Breast epithelium (tissue), 4 donors: ENCODE measurements at regions of chr20 and their contacts with region 1.

Region 1: DNA sequence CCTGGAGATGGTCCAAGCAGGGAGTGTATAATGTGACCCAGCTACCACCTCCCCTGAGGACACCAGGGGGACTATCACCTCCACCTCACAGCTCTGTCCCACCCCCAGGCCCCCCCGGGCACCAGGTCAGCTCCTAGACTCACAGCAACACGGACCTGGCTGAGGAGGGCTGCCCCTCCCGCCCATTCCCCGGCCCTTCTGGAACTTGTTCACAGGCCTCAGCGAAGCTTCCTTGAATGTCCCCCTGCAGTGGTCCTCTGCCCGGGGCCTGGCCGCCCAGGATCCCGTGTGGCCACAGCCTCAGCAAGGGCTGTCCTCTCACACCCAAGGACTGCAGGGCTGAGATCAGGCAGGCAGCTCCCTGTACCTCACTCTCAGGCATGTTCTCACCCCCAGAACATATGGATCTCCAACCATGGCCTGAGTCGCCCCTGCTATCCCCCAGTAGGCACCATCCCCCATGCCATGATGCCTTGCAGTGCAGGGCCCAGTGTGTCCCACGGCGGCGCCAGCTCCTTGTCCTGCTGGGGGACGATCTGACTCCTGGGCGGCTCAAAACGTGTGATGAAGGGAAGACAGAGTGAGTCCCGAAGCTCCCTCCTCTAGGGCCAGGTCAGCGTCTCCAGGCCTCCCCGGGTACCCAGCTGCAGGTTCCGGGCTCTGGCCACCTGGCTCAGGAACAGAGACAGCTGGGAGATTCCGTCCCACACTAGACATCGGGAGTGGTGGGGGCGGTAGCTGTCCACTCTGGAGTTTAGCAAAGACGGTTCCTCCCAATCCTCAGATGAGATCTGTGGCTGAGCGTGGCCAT is 158.4 kb downstream of the TAF4 start:
- DNase-seq: no peak
- H3K4me3 ChIP-seq: no peak overlapping the region
- H3K27ac ChIP-seq: no peak overlapping the region
- H3K4me1 ChIP-seq: no peaks in the 10 kb centered on the region
- H3K27me3 ChIP-seq: peaks cover 0 to 6% of the 10 kb centered on the region in 2 donors
- CTCF ChIP-seq: no peak
- POLR2A ChIP-seq: no peak

Region 2: GRCh38 chr20:61951695-61952533 is 44.6 kb after region 1 on chr20:
- intact Hi-C with region 1: loop called (anchors 1 kb)
- DNase-seq: peak in 1 of 2 donors; percentile 24
- H3K4me3 ChIP-seq: no peak overlapping the region
- H3K27ac ChIP-seq: no peak overlapping the region
- H3K4me1 ChIP-seq: no peaks in the 10 kb centered on the region
- H3K27me3 ChIP-seq: peaks cover 0 to 20% of the 10 kb centered on the region in 2 donors
- CTCF ChIP-seq: no peak
- POLR2A ChIP-seq: no peak

Region 3: DNA sequence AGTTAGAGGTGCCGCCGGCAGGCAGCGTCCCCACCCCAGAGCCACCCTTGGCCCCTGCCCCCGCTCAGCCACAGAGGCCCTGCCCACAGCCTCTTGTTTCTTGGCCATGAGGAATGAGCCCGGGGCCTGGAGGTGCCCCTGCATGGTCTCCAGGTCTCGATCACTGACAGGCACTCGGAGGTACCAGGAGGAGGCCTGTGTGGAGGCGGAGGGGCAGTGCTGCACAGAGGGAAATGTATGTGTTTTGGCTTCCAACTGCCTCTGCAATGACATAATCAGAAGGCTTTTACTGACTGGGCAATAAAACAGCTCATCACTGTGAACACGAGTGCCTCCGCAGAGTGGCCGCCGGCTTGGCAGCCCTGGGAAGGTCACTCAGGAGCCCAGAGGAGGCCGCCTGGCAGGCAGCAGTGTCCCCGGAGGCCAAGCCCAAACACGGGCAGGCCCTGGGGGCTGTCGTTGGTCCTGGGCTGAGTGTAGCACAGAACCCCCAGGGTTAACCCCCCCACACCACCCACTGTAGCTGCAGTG is 629.6 kb after region 1 on chr20:
- intact Hi-C with region 1: no loop called
- DNase-seq: no peak
- H3K4me3 ChIP-seq: no peak overlapping the region
- H3K27ac ChIP-seq: no peak overlapping the region
- H3K4me1 ChIP-seq: no peaks in the 10 kb centered on the region
- H3K27me3 ChIP-seq: peaks cover 0 to 78% of the 10 kb centered on the region in 2 donors
- CTCF ChIP-seq: no peak
- POLR2A ChIP-seq: no peak

Region 4: DNA sequence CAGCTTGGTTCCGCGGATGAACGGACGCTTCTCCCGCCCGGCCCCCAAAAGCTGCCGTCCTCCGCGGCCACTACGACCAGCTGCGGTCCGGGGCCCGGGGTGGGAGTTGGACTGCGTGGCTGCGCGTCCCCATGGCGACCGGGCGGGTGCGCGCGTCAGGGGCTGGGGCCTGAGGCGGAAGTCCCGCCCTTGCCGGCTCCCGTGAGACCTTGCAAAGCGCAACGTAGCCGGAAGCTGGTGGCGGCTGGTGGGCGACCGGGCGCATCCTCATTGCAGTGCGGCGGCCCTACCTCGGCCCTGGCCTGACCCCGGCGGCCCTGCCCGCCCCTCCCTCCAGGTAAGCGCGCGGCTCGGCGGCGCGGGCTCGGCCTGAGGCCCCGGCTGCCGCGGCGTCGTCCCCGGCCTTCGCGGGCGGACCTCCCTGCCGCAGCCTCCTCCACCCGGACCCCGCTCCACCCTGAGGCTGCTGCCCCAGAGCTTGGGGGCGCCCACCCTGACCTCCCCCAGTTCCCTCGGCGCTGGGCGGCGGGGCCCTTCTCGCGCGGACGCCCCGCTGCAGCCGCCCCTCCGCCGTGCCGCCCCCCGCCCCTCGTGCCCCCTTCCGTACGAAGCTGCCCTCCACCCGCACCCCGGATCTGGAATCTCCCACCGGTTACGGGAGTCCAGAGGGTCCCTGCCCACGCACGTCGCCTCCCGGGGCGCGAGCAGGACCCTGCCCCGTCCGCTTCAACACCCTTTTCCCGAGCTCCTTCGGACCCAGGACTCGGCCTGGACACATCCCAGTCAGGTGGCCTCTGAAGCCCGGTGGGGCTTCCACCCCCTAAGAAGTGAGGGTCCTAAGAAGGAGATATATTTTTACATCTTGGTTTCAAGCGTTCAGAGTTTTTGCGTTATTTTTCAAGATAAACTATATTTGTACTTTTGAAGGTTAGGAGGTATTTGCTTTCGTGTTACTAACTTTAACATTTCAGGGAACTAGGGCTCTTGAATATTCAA is 1365.6 kb after region 1 on chr20 and contains the start of gene ARFGAP1:
- intact Hi-C with region 1: no loop called
- DNase-seq: peak; percentile 81 to 83
- H3K4me3 ChIP-seq: peak within 1 kb of the TSS; percentile 94 to 100 (median 95)
- H3K27ac ChIP-seq: peak within 1 kb of the TSS; percentile 77 to 86
- H3K4me1 ChIP-seq: peaks cover 0 to 12% of the 10 kb centered on the region in 2 donors
- H3K27me3 ChIP-seq: no peaks in the 10 kb centered on the region
- CTCF ChIP-seq: no peak
- POLR2A ChIP-seq: peak; percentile 49
- total RNA-seq, gene ARFGAP1: 24.3 to 44.6 (median 38.2) TPM